ENCODE measurements at regions of chr3 and their contacts with region 1.

Region 1: GRCh38 chr3:121601212-121601812 is 8.1 kb downstream of the FBXO40 start:
- DNase-seq: no peak
- H3K4me3 ChIP-seq: no peak overlapping the region
- H3K27ac ChIP-seq: no peak overlapping the region
- H3K4me1 ChIP-seq: no peaks in the 10 kb centered on the region
- H3K27me3 ChIP-seq: no peaks in the 10 kb centered on the region
- CTCF ChIP-seq: no peak

Region 2: GRCh38 chr3:121834696-121835464 is 233.6 kb after region 1 on chr3 and contains the starts of genes EAF2 and IQCB1:
- CTCF ChIA-PET with region 1: no interaction called
- POLR2A ChIA-PET with region 1: interaction called, 13 read pairs
- intact Hi-C with region 1: no loop called
- DNase-seq: peak; percentile 96
- H3K4me3 ChIP-seq: peak within 1 kb of the TSS; percentile 84
- H3K27ac ChIP-seq: peak within 1 kb of the TSS; percentile 92
- H3K4me1 ChIP-seq: no peaks in the 10 kb centered on the region
- H3K27me3 ChIP-seq: no peaks in the 10 kb centered on the region
- CTCF ChIP-seq: no peak
- total RNA-seq, gene EAF2: 12.4 and 13.1 TPM in 2 replicates
- total RNA-seq, gene IQCB1: 44.0 and 49.5 TPM in 2 replicates

Measured in A673 (cell line).